ENCODE measurements at regions of chr18 and their contacts with region 1.

Region 1: GRCh38 chr18:13726232-13726971 is at the starts of genes FAM210A and RNMT:
- DNase-seq: peak; percentile 97
- H3K4me3 ChIP-seq: peak within 1 kb of the TSS; percentile 89
- H3K27ac ChIP-seq: peak within 1 kb of the TSS; percentile 95
- H3K4me1 ChIP-seq: no peaks in the 10 kb centered on the region
- H3K27me3 ChIP-seq: no peaks in the 10 kb centered on the region
- CTCF ChIP-seq: no peak
- total RNA-seq, gene FAM210A: 15.6 and 18.6 TPM in 2 replicates
- total RNA-seq, gene RNMT: 31.4 and 37.8 TPM in 2 replicates

Region 2: DNA sequence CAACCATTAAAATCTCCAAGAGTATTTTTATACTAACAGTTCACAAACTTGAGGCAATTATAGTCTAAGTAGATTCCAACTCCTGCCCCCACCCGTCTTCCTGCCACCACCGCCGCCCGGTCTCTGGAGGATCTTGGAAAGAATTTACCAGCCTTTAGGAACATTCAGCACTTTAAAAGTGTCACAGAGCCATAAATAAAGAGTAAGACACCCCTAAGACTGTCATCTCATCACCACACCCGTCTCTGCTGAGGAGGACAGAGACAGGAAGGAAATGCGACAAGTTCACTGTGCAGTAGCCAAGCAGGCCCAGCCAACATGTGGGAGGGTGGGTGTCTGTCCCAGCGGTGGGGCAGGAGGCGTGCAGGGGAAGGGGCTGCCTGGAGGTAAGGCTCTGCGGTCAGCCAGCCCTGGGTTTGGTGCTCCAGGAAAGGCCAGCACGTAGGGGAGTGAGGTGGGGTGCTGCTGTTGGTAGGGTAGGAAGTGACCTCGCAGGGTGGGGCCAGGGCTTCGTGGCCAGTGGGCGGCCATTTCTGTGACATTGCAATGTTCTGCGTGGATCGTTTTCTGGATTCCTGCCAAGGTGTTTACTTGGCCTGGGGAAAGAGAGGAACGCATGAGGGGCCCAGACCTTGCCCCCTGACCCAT is 111.6 kb before region 1 on chr18:
- CTCF ChIA-PET with region 1: no interaction called
- POLR2A ChIA-PET with region 1: no interaction called
- intact Hi-C with region 1: no loop called
- DNase-seq: peak; percentile 74
- H3K4me3 ChIP-seq: no peak overlapping the region
- H3K27ac ChIP-seq: no peak overlapping the region
- H3K4me1 ChIP-seq: peaks cover 33% of the 10 kb centered on the region
- H3K27me3 ChIP-seq: peaks cover 24% of the 10 kb centered on the region
- CTCF ChIP-seq: no peak

Region 3: GRCh38 chr18:13672657-13673056 is 53.7 kb before region 1 on chr18:
- CTCF ChIA-PET with region 1: no interaction called
- POLR2A ChIA-PET with region 1: no interaction called
- intact Hi-C with region 1: no loop called
- DNase-seq: peak; percentile 35
- H3K4me3 ChIP-seq: no peak overlapping the region
- H3K27ac ChIP-seq: peak overlapping the region; percentile 81
- H3K4me1 ChIP-seq: no peaks in the 10 kb centered on the region
- H3K27me3 ChIP-seq: no peaks in the 10 kb centered on the region
- CTCF ChIP-seq: no peak

Region 4: GRCh38 chr18:13713455-13714055 is 12.8 kb before region 1 on chr18:
- CTCF ChIA-PET with region 1: no interaction called
- POLR2A ChIA-PET with region 1: no interaction called
- intact Hi-C with region 1: loop called (anchors 1 kb)
- DNase-seq: no peak
- H3K4me3 ChIP-seq: no peak overlapping the region
- H3K27ac ChIP-seq: no peak overlapping the region
- H3K4me1 ChIP-seq: no peaks in the 10 kb centered on the region
- H3K27me3 ChIP-seq: no peaks in the 10 kb centered on the region
- CTCF ChIP-seq: no peak